CD4-positive, alpha-beta memory T cell (primary cell): ENCODE measurements at regions of chr3 and their contacts with region 1.

Region 1: GRCh38 chr3:46866720-46867549 is 3.7 kb upstream of the MYL3 start:
- DNase-seq: peak; percentile 59 to 71 (median 66)
- H3K4me3 ChIP-seq: no peak overlapping the region
- H3K4me3 Mint-ChIP-seq: no peak overlapping the region
- H3K27ac ChIP-seq: no peak overlapping the region
- H3K27ac Mint-ChIP-seq: peak overlapping the region in 1 of 7 donors; percentile 31
- H3K4me1 ChIP-seq: no peaks in the 10 kb centered on the region
- H3K4me1 Mint-ChIP-seq: peaks cover 0 to 5% (median 2%) of the 10 kb centered on the region in 4 donors
- H3K27me3 ChIP-seq: no peaks in the 10 kb centered on the region
- H3K27me3 Mint-ChIP-seq: peaks cover 3 to 7% of the 10 kb centered on the region in 2 donors

Region 2: GRCh38 chr3:46895204-46895660 is 28.3 kb after region 1 on chr3:
- CTCF ChIA-PET with region 1: interaction called, 12 read pairs
- POLR2A ChIA-PET with region 1: no interaction called
- intact Hi-C with region 1: loop called (anchors 1 kb)
- DNase-seq: peak; percentile 71 to 78 (median 74)
- H3K4me3 ChIP-seq: no peak overlapping the region
- H3K4me3 Mint-ChIP-seq: peak overlapping the region in 1 of 8 donors; percentile 18
- H3K27ac ChIP-seq: no peak overlapping the region
- H3K27ac Mint-ChIP-seq: peak overlapping the region in 4 of 7 donors; percentile 0 to 66 (median 46)
- H3K4me1 ChIP-seq: peaks cover 5% of the 10 kb centered on the region
- H3K4me1 Mint-ChIP-seq: peaks cover 6 to 26% (median 15%) of the 10 kb centered on the region in 4 donors
- H3K27me3 ChIP-seq: peaks cover 3% of the 10 kb centered on the region
- H3K27me3 Mint-ChIP-seq: peaks cover 25 to 46% of the 10 kb centered on the region in 2 donors

Region 3: DNA sequence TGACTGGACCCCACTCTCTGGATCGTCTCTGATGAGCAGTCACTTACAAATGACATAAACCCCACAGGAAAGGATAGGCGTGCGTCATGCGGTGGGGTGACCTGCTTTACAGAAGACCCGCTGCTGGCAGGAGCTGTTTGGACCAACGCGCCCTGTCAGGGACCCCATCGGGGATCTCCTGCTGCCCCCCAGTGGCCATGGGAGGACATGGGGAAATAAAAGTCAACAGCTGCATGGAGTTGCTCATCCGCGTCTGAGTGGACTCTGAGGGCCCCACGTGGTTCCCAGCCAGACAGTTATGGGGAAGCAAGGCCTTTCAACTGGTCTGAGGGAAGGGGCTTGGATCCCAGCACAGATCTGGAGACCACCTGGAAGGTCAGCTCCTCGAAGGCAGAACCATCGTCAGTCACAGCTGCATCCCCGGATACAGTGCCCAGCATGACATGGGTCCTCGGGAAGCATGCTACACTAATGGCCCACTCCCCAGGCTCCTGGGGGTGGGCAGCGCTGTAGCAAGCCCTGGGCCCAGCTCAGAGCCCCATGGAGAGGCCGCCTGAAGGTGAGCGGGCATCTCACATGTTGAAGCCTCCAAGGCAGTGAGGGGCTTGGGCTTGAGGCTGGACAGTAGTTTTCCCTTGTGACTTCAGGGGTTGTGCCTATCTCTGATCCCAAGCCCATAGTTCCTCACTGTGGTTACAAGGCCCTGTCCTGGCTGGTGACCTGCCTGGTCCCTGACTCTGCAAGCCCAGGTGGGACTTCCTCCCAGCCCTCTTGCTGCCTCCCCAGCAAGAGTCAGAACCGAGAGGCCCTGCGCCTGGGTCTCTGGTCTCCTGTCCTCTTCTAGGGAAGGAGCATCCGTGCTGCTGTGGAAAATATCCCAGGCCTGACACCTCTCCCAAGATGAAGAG is 42.9 kb after region 1 on chr3:
- CTCF ChIA-PET with region 1: interaction called, 13 read pairs
- POLR2A ChIA-PET with region 1: no interaction called
- intact Hi-C with region 1: loop called (anchors 1 kb)
- DNase-seq: peak; percentile 64 to 82 (median 70)
- H3K4me3 ChIP-seq: no peak overlapping the region
- H3K4me3 Mint-ChIP-seq: peak overlapping the region in 1 of 8 donors; percentile 23
- H3K27ac ChIP-seq: no peak overlapping the region
- H3K27ac Mint-ChIP-seq: peak overlapping the region in 2 of 7 donors; percentile 4 to 30
- H3K4me1 ChIP-seq: peaks cover 27% of the 10 kb centered on the region
- H3K4me1 Mint-ChIP-seq: peaks cover 13 to 18% (median 17%) of the 10 kb centered on the region in 4 donors
- H3K27me3 ChIP-seq: no peaks in the 10 kb centered on the region
- H3K27me3 Mint-ChIP-seq: no peaks in the 10 kb centered on the region

Region 4: GRCh38 chr3:47324278-47324865 is 457.4 kb after region 1 on chr3:
- CTCF ChIA-PET with region 1: interaction called, 23 read pairs
- POLR2A ChIA-PET with region 1: no interaction called
- intact Hi-C with region 1: no loop called
- DNase-seq: peak; percentile 47 to 63 (median 48)
- H3K4me3 ChIP-seq: no peak overlapping the region
- H3K4me3 Mint-ChIP-seq: no peak overlapping the region
- H3K27ac ChIP-seq: no peak overlapping the region
- H3K27ac Mint-ChIP-seq: peak overlapping the region in 1 of 7 donors; percentile 37
- H3K4me1 ChIP-seq: no peaks in the 10 kb centered on the region
- H3K4me1 Mint-ChIP-seq: peaks cover 0 to 5% (median 1%) of the 10 kb centered on the region in 4 donors
- H3K27me3 ChIP-seq: no peaks in the 10 kb centered on the region
- H3K27me3 Mint-ChIP-seq: no peaks in the 10 kb centered on the region

Region 5: DNA sequence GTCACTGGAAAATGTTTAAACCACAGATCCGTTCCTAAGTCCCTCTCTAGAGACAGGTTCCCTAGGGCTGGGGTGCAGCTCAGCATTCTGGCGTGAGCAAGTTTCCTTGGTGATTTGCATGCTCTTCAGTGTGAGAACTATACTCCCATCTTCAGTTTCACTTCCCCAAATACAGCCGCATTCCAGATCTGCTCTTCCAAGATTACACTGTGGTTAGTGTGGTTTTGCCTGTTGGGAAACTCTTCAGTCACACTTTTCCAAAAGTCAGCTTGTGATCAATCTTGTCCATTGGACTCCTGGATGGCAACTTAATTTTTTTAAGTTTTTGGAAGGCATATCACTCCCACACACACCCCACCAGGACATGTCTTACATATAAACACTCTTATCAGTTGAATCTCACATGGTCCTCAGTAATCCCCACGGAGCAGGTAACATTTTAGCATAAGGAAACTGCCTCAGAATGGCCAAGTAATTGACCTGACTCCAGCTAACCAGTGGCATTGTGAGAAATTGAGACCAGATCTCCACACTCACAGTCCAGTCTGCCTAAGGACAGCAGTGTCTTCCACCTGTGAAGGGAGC is 480.4 kb after region 1 on chr3:
- CTCF ChIA-PET with region 1: no interaction called
- POLR2A ChIA-PET with region 1: no interaction called
- intact Hi-C with region 1: no loop called
- DNase-seq: no peak
- H3K4me3 ChIP-seq: no peak overlapping the region
- H3K4me3 Mint-ChIP-seq: no peak overlapping the region
- H3K27ac ChIP-seq: no peak overlapping the region
- H3K27ac Mint-ChIP-seq: peak overlapping the region in 3 of 7 donors; percentile 3 to 43 (median 43)
- H3K4me1 ChIP-seq: no peaks in the 10 kb centered on the region
- H3K4me1 Mint-ChIP-seq: no peaks in the 10 kb centered on the region
- H3K27me3 ChIP-seq: no peaks in the 10 kb centered on the region
- H3K27me3 Mint-ChIP-seq: no peaks in the 10 kb centered on the region

Region 6: DNA sequence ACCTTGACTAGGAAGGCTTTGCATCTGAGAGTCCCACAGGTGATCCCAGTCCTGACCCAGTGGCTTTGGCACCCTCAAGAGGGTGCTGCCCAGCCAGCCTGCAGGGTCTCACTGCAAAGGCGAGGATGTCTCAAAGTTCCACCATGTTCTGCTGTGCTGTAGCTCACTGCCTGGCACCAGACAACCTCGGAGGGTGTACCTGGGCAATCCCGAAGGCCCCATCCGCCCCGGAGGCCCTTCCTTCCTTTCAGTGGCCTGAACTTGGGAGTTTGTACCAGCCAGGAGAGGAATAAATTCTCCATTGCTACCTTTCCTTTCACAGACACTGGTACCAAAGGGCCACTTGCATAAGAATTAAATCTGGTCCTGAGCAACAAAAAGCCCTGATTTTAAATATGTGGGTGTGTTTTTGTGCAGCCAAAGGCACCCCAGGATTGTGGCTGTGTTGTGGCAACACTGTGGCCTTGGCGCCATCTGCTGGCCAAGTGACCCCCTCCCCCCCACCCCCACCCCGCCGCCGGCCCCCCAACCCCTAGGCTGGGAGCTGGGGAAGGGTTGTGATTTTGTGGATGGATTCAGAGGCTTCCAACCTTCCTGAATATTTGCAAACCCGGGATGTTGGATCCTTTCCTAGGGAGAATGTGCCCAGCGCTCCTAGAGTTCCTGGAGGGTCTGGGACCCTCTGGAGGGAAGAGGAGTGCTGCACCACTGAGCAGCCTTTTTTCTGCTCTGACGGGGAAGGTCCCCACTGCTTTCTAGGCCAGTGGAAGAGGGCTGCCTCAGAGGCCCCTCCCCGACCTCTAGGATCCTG is 504.2 kb after region 1 on chr3:
- CTCF ChIA-PET with region 1: no interaction called
- POLR2A ChIA-PET with region 1: no interaction called
- intact Hi-C with region 1: loop called (anchors 2 kb)
- DNase-seq: peak in 2 of 5 donors; percentile 15 to 22
- H3K4me3 ChIP-seq: no peak overlapping the region
- H3K4me3 Mint-ChIP-seq: no peak overlapping the region
- H3K27ac ChIP-seq: no peak overlapping the region
- H3K27ac Mint-ChIP-seq: no peak overlapping the region
- H3K4me1 ChIP-seq: no peaks in the 10 kb centered on the region
- H3K4me1 Mint-ChIP-seq: no peaks in the 10 kb centered on the region
- H3K27me3 ChIP-seq: no peaks in the 10 kb centered on the region
- H3K27me3 Mint-ChIP-seq: peaks cover 1 to 2% of the 10 kb centered on the region in 2 donors